Breast epithelium (tissue), 4 donors: ENCODE measurements at regions of chr16 and their contacts with region 1.

Region 1: GRCh38 chr16:28549390-28549789 is 4.3 kb upstream of the SGF29 start:
- DNase-seq: no peak
- H3K4me3 ChIP-seq: no peak overlapping the region
- H3K27ac ChIP-seq: no peak overlapping the region
- H3K4me1 ChIP-seq: no peaks in the 10 kb centered on the region
- H3K27me3 ChIP-seq: no peaks in the 10 kb centered on the region
- CTCF ChIP-seq: peak in 2 of 3 donors; percentile 49 to 56
- POLR2A ChIP-seq: no peak

Region 2: GRCh38 chr16:28491970-28492474 is 57.4 kb before region 1 on chr16 and contains the start of gene CLN3:
- intact Hi-C with region 1: loop called (anchors 10 kb)
- DNase-seq: peak; percentile 91 to 92
- H3K4me3 ChIP-seq: peak within 1 kb of the TSS; percentile 90 to 97 (median 97)
- H3K27ac ChIP-seq: peak within 1 kb of the TSS; percentile 95 to 98
- H3K4me1 ChIP-seq: no peaks in the 10 kb centered on the region
- H3K27me3 ChIP-seq: no peaks in the 10 kb centered on the region
- CTCF ChIP-seq: peak in 1 of 3 donors; percentile 37
- POLR2A ChIP-seq: no peak
- total RNA-seq, gene CLN3: 25.1 to 39.1 (median 38.7) TPM